AG04449 (cell line): ENCODE measurements at regions of chr16 and their contacts with region 1.

Region 1: DNA sequence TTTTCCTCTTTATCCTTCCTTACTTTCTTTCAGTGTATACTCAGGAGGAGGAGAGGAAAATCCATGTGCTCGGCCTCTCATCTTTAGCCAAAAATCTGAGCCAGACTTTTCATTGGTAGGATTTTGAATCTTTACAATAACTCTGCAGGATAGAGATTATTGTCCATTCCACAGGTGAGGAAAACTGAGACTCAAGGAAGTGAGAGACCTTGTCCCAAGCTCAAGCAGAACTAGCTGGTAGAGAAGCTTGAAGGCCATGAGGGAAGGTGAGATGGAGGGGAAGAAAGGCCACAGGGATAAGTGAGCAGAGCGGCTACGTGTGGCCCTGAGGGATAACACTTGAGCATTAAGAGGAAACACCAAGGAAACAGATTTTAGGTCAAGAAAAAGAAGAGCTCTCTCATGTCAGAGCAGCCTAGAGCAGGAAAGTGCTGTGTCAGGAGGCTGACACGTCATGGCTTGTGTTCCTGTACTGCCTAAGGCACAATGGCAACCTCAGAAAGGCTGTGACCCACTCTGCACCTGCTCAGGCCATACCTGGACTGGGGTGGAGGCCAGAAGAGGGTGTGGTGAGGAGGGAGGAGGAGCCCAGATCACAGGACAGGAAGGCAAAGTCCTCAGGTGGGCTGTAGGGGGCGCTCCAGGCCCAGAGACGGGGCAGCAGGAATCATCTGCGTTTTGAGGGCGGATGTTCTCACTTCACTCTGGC is 11.9 kb downstream of the MT4 start:
- DNase-seq: no peak
- H3K4me3 ChIP-seq: no peak overlapping the region
- CTCF ChIP-seq: peak; percentile 76

Region 2: GRCh38 chr16:56564773-56565477 is 11.8 kb before region 1 on chr16 and contains the start of gene MT4:
- CTCF ChIA-PET with region 1: interaction called, 31 read pairs
- POLR2A ChIA-PET with region 1: no interaction called
- DNase-seq: no peak
- H3K4me3 ChIP-seq: no peak within 1 kb of the TSS
- CTCF ChIP-seq: no peak

Region 3: GRCh38 chr16:56589141-56590039 is 12.7 kb after region 1 on chr16 and contains the start of gene MT3:
- CTCF ChIA-PET with region 1: interaction called, 23 read pairs
- POLR2A ChIA-PET with region 1: no interaction called
- DNase-seq: no peak
- H3K4me3 ChIP-seq: peak within 1 kb of the TSS; percentile 46
- CTCF ChIP-seq: no peak